Cardiac septum (tissue), 1 donor: ENCODE measurements at regions of chr6 and their contacts with region 1.

Region 1: DNA sequence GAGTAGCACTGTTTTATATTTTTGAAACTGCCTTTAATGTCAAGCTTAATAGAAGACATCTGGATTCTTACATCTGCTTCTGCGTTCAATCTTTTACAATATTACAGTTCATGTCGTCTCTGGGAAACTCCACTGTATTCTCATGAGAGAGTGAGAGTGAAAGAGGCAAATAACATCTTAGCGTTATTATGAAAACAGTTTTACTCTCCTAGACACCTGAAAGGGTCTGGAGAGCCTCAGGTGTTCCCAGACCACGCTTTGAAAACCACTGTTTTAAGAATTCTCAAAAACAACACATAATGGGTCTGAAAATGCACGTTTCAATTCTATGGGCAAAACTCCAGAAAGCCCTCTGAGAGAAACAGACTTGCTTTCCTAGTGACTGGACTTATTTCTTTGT is 63.3 kb downstream of the ARHGAP18 start:
- DNase-seq: no peak

Region 2: DNA sequence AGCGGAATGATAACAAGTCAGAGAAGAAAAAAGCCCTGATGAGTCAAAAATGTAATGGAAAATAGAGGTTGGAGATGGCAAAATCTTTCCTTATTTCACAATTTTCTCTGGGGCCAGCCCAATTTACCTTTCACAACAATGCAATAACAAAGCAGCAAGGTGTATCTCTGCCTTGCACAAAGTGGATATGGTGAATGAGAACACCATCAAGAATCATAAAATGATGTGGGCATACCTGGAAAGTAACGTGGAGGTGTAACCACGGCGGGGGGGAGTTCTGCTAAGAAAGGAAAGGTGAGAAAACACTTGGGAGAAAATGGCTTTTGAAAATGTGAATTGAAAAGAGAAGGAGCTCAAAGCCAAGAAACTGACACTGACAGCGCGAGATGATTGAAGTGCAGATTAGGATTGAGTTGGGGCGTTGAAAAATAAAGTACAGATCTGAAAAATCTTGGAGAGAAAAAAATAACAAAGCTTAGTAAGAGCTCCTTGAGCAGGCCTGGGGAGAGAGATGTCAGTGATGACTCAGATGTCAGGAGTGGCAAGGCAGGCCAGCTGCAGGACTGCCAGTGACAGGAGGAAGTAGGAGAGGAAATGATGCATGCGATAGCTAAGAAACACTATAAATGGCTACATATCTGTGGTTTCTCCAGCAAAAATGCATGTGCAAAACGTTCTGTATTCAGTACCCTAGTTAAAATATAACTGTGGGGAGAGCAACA is 37.1 kb after region 1 on chr6:
- intact Hi-C with region 1: loop called (anchors 5 kb)
- DNase-seq: peak; percentile 88